K562 (cell line): ENCODE measurements at regions of chr14 and their contacts with region 1.

Region 1: GRCh38 chr14:59126710-59127432 is 61.6 kb upstream of the DAAM1 start:
- DNase-seq: peak; percentile 36 to 56 (median 53)
- ATAC-seq: peak; percentile 89
- H3K4me3 ChIP-seq: no peak overlapping the region
- H3K27ac ChIP-seq: no peak overlapping the region
- H3K4me1 ChIP-seq: no peaks in the 10 kb centered on the region
- H3K27me3 ChIP-seq: no peaks in the 10 kb centered on the region
- CTCF ChIP-seq: peak; percentile 57 to 68 (median 61)
- EP300 ChIP-seq: no peak
- POLR2A ChIP-seq: no peak
- RAD21 ChIP-seq: peak; percentile 84 to 88

Region 2: DNA sequence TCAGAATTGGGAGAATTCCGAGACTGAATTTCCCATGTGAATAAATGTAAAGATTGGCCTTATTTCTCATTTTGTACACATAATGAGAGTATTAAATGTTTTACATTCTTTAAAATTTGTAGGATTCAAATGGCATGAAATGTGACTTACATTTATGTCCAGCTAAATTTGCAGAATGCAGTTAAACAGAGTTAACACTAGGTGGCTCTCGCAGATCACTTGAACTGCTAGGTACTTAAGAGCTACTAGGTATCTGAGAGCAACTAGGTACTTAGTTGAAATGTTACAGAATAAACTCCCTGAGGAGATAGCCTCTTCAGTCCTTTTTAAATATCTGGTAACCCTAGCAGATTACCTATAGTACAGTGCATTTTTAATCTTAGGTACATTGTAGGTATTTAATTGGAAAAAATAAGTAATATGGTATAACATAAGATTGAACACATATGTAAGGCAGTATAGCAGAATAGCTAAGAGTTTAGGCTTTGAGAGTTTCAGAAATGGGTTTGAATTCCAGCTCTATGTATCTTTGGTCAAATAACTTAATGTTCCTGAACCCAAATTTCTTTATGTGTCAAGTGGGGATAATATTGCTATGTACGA is 625.6 kb before region 1 on chr14:
- CTCF ChIA-PET with region 1: interaction called, 3 read pairs
- POLR2A ChIA-PET with region 1: no interaction called
- in situ Hi-C with region 1: no loop called
- intact Hi-C with region 1: loop called (anchors 5 kb)
- DNase-seq: peak; percentile 9 to 49 (median 20)
- ATAC-seq: peak; percentile 83
- H3K4me3 ChIP-seq: no peak overlapping the region
- H3K27ac ChIP-seq: no peak overlapping the region
- H3K4me1 ChIP-seq: no peaks in the 10 kb centered on the region
- H3K27me3 ChIP-seq: no peaks in the 10 kb centered on the region
- CTCF ChIP-seq: peak; percentile 54 to 75 (median 59); a peak in 5 of 6 replicates
- EP300 ChIP-seq: no peak
- POLR2A ChIP-seq: no peak
- RAD21 ChIP-seq: peak; percentile 76 to 82

Region 3: GRCh38 chr14:58637391-58638230 is 489.3 kb before region 1 on chr14 and contains the start of gene DACT1:
- CTCF ChIA-PET with region 1: no interaction called
- POLR2A ChIA-PET with region 1: no interaction called
- in situ Hi-C with region 1: no loop called
- intact Hi-C with region 1: loop called (anchors 5 kb)
- DNase-seq: peak; percentile 27 to 66 (median 48)
- ATAC-seq: peak; percentile 87
- H3K4me3 ChIP-seq: peak within 1 kb of the TSS; percentile 18
- H3K27ac ChIP-seq: no peak within 1 kb of the TSS
- H3K4me1 ChIP-seq: peaks cover 0 to 15% of the 10 kb centered on the region in 2 experiments; a peak in 2 of 5 replicates
- H3K27me3 ChIP-seq: peaks cover 14 to 19% of the 10 kb centered on the region in 2 experiments; a peak in 4 of 5 replicates
- CTCF ChIP-seq: no peak
- EP300 ChIP-seq: no peak
- POLR2A ChIP-seq: no peak
- RAD21 ChIP-seq: no peak
- polyA plus RNA-seq, gene DACT1: 0.07 to 0.13 TPM

Region 4: DNA sequence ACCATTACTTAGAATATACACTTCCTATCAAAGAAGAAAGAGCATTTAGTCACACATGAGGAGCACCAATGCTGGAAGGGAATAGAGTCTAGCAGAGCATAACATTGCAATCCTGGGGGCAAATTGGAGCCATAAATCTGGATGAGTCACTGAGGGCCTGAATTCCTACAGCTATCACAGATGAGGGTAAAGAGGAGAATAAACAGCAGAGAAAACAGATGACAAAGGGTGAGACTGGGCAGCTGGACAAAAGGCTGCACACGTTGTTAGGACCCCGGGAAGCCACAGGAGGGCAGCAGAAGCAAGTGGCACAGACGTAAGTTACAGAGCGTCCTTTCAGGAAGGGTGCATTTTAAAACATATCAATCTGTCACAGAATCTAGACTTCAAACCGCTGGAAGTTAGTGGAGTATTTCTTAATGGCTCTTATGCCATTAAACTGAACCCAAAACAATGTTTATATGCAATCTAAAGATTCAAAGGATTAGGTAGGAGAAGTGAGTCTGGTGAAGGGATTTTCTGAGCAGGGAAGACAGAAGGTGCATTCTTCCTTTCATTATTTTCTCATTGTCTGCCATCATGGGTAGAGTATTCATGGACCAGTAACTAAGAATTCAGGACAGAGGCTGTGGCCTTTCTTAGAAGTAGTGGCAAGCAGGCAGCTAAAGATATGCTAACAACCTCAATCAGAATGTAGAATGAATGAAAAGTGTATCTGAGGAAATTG is 98.2 kb before region 1 on chr14:
- CTCF ChIA-PET with region 1: no interaction called
- POLR2A ChIA-PET with region 1: no interaction called
- in situ Hi-C with region 1: no loop called
- intact Hi-C with region 1: loop called (anchors 2 kb)
- DNase-seq: peak; percentile 24 to 47 (median 26)
- ATAC-seq: peak; percentile 88
- H3K4me3 ChIP-seq: no peak overlapping the region
- H3K27ac ChIP-seq: no peak overlapping the region
- H3K4me1 ChIP-seq: no peaks in the 10 kb centered on the region
- H3K27me3 ChIP-seq: no peaks in the 10 kb centered on the region
- CTCF ChIP-seq: peak; percentile 67 to 74 (median 71)
- EP300 ChIP-seq: no peak
- POLR2A ChIP-seq: no peak
- RAD21 ChIP-seq: peak; percentile 74 to 79

Region 5: GRCh38 chr14:59098377-59098776 is 28.5 kb before region 1 on chr14:
- CTCF ChIA-PET with region 1: no interaction called
- POLR2A ChIA-PET with region 1: no interaction called
- in situ Hi-C with region 1: no loop called
- intact Hi-C with region 1: no loop called
- DNase-seq: no peak
- ATAC-seq: no peak
- H3K4me3 ChIP-seq: no peak overlapping the region
- H3K27ac ChIP-seq: no peak overlapping the region
- H3K4me1 ChIP-seq: no peaks in the 10 kb centered on the region
- H3K27me3 ChIP-seq: no peaks in the 10 kb centered on the region; a peak in 1 of 5 replicates
- CTCF ChIP-seq: no peak
- EP300 ChIP-seq: no peak
- POLR2A ChIP-seq: no peak
- RAD21 ChIP-seq: no peak

Region 6: DNA sequence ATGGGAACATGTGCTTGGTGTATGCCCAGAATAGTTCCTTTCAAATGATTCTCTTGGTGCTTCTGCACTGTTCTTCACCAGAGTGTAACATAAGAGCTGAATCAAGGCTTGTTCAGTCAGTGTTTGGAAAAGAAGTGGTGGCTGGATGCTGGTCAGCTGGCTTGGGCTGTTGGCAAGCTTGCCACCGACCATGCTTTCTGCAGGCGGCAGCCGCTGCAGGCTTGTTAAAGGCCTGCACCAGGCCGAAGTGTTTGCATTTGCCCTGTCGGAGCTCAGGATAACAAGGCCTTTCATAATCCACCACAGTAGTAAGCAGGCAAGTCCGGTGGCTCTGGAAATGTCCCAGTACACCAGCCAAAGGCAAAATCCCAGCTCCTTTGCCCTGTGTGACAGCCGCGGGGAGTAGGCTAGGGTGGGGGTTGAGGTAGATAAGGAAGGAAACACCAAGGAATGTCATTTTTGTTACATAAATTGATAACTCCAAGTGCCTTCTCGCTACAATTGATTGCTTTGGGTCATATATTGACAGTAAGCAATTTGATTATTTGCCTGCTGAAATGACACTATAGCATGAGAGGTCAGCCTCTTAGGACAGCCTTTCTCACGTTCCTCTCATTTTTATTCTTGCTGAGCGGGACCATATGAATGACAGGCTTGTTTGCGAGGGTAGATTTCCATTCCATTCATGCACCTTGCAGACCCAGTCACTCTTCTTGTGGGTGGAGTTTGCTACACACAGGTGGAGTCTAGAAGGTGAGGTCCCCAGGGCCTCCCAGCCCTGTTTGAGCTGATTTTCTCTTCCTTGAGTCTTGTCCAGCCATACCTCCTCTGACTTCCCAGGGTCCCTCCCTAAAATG is 88.7 kb after region 1 on chr14:
- CTCF ChIA-PET with region 1: no interaction called
- POLR2A ChIA-PET with region 1: no interaction called
- in situ Hi-C with region 1: no loop called
- intact Hi-C with region 1: no loop called
- DNase-seq: no peak
- ATAC-seq: no peak
- H3K4me3 ChIP-seq: no peak overlapping the region
- H3K27ac ChIP-seq: no peak overlapping the region
- H3K4me1 ChIP-seq: no peaks in the 10 kb centered on the region
- H3K27me3 ChIP-seq: no peaks in the 10 kb centered on the region
- CTCF ChIP-seq: no peak
- EP300 ChIP-seq: no peak
- POLR2A ChIP-seq: no peak
- RAD21 ChIP-seq: no peak

Region 7: GRCh38 chr14:59438195-59438647 is 311.4 kb after region 1 on chr14:
- CTCF ChIA-PET with region 1: interaction called, 35 read pairs
- POLR2A ChIA-PET with region 1: no interaction called
- in situ Hi-C with region 1: loop called (anchors 5 kb)
- intact Hi-C with region 1: no loop called
- DNase-seq: no peak
- ATAC-seq: no peak
- H3K4me3 ChIP-seq: no peak overlapping the region
- H3K27ac ChIP-seq: no peak overlapping the region
- H3K4me1 ChIP-seq: no peaks in the 10 kb centered on the region
- H3K27me3 ChIP-seq: no peaks in the 10 kb centered on the region
- CTCF ChIP-seq: no peak
- EP300 ChIP-seq: no peak
- POLR2A ChIP-seq: no peak
- RAD21 ChIP-seq: no peak

Region 8: DNA sequence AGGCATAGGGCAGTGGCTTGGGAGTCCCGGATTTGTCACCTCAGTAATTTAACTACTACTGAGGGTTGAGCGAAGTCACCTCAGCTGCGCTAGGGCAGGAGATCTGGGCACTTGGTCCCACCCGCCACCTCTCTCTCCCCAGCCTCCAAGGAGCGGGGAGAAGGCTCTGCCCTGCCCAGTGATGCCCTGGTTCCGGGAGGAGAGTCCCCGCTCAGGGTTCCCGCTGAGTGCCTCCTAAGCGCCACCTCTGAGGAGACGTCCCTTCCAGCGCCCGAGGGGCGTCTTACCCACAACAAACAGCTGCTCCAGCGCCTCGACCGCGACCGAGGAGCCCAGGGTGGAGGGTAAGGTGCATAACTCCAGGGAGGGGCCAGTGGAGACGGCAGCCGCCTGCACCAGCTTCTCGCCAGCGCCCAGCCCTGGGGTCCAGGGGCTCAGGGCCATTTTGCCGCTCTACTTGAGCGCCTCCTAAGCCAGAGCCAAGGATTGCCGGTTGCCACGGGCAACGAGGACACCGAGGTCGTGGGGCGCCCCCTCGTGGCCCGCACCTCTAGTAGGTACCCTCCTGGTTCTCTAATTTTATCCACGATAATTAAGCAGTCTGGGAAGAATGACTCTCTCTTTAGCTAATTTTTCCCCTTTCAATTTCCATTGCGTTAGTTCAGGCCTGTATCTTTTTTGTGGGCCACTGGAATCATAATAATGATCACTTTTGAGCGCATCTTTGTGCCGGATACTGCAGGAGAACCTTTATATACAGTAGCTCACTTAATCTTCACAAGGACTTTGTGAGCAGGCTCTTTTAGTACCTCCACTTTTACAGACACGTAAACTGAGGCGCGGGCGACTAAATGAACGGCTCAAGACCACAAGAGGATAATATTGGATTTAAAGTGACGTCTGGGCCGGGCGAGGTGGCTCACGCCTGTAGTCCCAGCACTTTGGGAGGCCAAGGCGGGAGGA is 449.7 kb after region 1 on chr14 and contains the start of gene CCDC175:
- CTCF ChIA-PET with region 1: interaction called, 4 read pairs
- POLR2A ChIA-PET with region 1: no interaction called
- in situ Hi-C with region 1: loop called (anchors 10 kb)
- intact Hi-C with region 1: loop called (anchors 1 kb)
- DNase-seq: peak; percentile 75 to 86 (median 82)
- ATAC-seq: peak; percentile 100
- H3K4me3 ChIP-seq: peak within 1 kb of the TSS; percentile 41
- H3K27ac ChIP-seq: no peak within 1 kb of the TSS
- H3K4me1 ChIP-seq: peaks cover 0 to 6% of the 10 kb centered on the region in 2 experiments; a peak in 2 of 5 replicates
- H3K27me3 ChIP-seq: peaks cover 0 to 5% of the 10 kb centered on the region in 2 experiments; a peak in 2 of 5 replicates
- CTCF ChIP-seq: peak; percentile 81 to 96 (median 93)
- EP300 ChIP-seq: no peak
- POLR2A ChIP-seq: no peak
- RAD21 ChIP-seq: peak; percentile 72 to 77
- polyA plus RNA-seq, gene CCDC175: not detected

Region 9: GRCh38 chr14:59897761-59898383 is 771.0 kb after region 1 on chr14:
- CTCF ChIA-PET with region 1: no interaction called
- POLR2A ChIA-PET with region 1: no interaction called
- in situ Hi-C with region 1: no loop called
- intact Hi-C with region 1: loop called (anchors 10 kb)
- DNase-seq: peak in 3 of 4 experiments; percentile 6 to 18 (median 14)
- ATAC-seq: peak; percentile 67
- H3K4me3 ChIP-seq: no peak overlapping the region
- H3K27ac ChIP-seq: no peak overlapping the region
- H3K4me1 ChIP-seq: no peaks in the 10 kb centered on the region
- H3K27me3 ChIP-seq: no peaks in the 10 kb centered on the region
- CTCF ChIP-seq: peak; percentile 43 to 46 (median 45)
- EP300 ChIP-seq: no peak
- POLR2A ChIP-seq: no peak
- RAD21 ChIP-seq: peak in 1 of 2 experiments; percentile 59; a peak in 2 of 4 replicates